Tibial artery (tissue), 4 donors: ENCODE measurements at regions of chr9 and their contacts with region 1.

Region 1: DNA sequence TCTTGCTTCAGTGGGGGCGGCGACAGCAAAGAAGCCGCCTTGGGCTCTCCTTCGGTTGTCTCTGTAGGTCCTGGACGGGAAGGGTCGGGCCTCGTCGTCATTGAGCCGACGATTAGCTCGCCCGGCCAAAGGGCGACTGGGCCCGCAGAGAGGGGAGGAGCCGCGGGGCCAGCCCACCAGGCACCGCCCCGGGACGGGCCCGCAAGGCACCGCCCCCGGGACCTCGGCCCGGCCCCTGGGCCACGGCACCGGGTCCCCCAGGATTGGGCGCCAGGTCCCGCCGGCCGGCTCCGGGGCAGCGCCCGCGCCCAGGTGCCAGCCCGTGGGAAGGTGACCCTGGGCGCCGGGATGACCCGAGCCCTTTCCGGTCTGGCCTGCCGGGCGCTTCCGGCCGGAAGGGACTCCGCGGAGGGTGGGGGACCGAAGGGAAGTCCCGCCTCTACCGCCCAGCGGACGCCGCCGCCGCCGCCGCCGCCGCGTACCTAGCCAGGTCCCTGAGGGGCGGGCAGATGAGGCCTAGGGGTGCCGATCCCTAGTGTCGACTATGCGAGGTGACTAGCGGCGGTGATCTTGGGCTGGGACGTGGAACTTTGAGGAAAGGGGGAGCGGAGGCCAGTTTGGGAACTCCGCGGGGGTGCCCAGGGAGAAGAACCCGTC is at the starts of genes GBA2 and RGP1:
- DNase-seq: peak; percentile 71 to 90
- H3K4me3 ChIP-seq: peak within 1 kb of the TSS; percentile 62 to 91
- H3K27ac ChIP-seq: peak within 1 kb of the TSS; percentile 79 to 91
- H3K4me1 ChIP-seq: peaks cover 0 to 56% (median 47%) of the 10 kb centered on the region in 4 donors
- H3K27me3 ChIP-seq: no peaks in the 10 kb centered on the region
- CTCF ChIP-seq: no peak

Region 2: DNA sequence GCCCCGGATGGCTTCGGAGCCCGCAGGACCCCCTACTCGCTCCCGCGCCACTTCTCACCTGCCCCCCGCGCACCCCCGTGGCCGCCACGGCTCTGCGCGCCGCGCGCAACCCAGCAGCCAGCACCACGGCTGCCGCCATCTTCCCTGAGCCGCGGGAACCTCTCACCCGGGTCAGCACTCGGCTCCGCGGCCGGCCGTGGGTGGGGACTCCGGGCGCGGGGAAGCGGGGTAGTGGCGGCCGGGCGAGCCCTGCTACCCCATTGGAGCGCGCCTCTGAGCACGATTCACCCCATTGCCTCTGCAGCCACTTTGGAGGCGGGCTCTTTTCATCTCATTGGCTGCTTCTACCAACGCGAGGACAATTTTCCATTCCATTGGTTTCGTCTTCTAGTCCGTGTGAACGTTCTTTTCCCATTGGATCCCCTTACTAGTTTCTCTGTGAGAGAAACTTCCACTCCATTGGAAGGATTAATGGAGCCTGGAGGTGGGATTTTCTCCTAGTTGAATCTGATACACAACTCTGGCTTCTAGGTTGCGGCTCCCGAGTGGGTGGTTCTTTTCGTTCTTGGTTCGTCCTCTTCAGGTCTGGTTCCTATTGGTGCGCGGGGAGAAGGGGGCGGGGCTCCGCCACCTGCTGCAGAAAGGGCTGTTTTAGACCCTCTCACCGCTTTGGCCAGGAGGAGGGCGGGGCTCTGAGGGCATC is 66.0 kb after region 1 on chr9 and contains the start of gene HINT2:
- intact Hi-C with region 1: loop called (anchors 10 kb)
- DNase-seq: peak; percentile 98 to 99
- H3K4me3 ChIP-seq: peak within 1 kb of the TSS; percentile 72 to 90
- H3K27ac ChIP-seq: peak within 1 kb of the TSS; percentile 90 to 97
- H3K4me1 ChIP-seq: peaks cover 0 to 38% (median 30%) of the 10 kb centered on the region in 4 donors
- H3K27me3 ChIP-seq: no peaks in the 10 kb centered on the region
- CTCF ChIP-seq: no peak